HEK293T (cell line): ENCODE measurements at regions of chr7 and their contacts with region 1.

Region 1: GRCh38 chr7:100190048-100190711 is 12.5 kb downstream of the STAG3 start:
- DNase-seq: no peak

Region 2: GRCh38 chr7:100177045-100178001 is 12.9 kb before region 1 on chr7 and contains the starts of genes GPC2 and STAG3:
- CTCF ChIA-PET with region 1: interaction called, 14 read pairs
- POLR2A ChIA-PET with region 1: interaction called, 3 read pairs
- DNase-seq: peak; percentile 96

Region 3: DNA sequence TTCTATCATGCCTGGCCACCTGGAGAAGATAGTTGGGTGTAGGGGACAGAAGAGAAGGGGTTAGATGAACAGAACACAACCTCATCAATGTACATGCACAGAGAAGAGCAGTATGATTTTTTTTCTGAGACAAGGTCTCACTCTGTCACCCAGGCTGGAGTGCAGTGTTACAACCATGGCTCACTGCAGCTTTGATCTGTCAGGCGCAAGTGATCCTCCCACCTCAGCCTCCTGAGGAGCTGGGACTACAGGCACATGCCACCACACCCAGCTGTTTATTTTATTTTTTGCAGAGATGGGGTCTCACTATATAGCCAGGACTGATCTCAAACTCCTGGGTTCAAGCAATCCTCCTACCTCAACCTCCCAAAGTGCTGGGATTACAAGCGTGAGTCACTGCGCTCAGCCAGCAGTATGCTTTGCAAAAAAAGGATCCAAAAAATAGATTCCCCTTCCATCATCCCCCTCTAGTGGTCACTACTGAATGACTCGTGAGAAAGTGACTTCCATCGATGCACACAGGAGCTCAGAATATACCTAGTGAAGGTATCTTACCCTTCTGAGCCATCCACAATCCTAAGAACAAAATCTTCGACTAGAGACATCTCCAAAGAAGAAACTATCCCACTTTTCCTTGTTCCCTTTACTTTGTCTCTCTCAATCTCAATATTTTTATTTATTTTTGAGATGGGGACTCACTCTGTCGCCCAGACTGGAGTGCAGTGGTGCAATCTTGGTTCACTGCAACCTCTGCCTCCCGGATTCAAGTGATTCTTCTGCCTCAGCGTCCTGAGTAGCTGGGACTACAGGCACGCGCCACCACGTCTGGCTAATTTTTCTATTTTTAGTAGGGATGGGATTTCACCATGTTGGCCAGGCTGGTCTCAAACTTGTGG is 217.4 kb after region 1 on chr7:
- CTCF ChIA-PET with region 1: no interaction called
- POLR2A ChIA-PET with region 1: no interaction called
- DNase-seq: peak; percentile 75